Natural killer cell (primary cell): ENCODE measurements at regions of chr4 and their contacts with region 1.

Region 1: DNA sequence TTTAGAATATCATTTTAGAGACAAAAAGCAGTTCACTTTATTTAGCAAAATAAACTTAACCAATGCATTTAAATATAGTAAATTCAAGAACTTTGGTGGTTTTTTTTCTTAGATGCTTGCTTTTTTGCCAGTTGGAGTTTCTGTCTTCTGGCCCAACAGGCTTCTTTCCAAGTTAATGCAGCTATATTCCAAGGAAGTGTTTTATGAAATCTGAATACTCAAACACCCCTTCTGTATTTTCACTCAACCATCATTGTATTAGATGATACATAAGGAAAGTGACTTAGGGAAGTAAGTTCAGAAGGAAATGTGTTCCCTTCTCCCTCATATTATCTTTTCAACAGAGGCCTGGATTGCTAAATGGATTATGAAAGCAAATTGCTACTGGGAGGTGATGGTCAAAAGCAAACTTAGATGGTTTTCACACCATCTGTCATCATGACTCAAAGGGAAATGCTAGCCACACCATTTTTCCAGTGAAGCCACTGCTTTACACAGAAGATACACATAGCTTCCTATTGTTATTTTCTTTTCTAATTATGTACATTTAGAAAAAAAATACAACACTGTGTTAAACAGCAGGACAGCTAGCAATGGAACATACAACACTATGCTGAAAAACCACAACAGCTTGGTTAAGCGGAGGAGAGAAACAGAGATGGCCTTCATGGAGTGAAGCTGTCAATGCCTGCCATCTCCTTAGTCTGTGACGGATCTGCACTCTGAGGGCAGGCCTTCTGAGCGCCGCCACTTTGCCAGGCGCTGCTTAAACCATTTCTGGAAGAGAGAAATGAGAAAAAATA is 32.9 kb downstream of the HOPX start:
- DNase-seq: peak in 1 of 2 donors; percentile 20
- ATAC-seq: peak; percentile 47 to 65 (median 56)
- H3K4me3 ChIP-seq: no peak overlapping the region
- H3K4me3 Mint-ChIP-seq: peak overlapping the region; percentile 81
- H3K27ac ChIP-seq: peak overlapping the region; percentile 61
- H3K27ac Mint-ChIP-seq: peak overlapping the region; percentile 95 to 98
- H3K4me1 ChIP-seq: peaks cover 46% of the 10 kb centered on the region
- H3K4me1 Mint-ChIP-seq: peaks cover 85% of the 10 kb centered on the region in 2 donors
- H3K27me3 ChIP-seq: no peaks in the 10 kb centered on the region
- H3K27me3 Mint-ChIP-seq: no peaks in the 10 kb centered on the region
- CTCF ChIP-seq: no peak

Region 2: DNA sequence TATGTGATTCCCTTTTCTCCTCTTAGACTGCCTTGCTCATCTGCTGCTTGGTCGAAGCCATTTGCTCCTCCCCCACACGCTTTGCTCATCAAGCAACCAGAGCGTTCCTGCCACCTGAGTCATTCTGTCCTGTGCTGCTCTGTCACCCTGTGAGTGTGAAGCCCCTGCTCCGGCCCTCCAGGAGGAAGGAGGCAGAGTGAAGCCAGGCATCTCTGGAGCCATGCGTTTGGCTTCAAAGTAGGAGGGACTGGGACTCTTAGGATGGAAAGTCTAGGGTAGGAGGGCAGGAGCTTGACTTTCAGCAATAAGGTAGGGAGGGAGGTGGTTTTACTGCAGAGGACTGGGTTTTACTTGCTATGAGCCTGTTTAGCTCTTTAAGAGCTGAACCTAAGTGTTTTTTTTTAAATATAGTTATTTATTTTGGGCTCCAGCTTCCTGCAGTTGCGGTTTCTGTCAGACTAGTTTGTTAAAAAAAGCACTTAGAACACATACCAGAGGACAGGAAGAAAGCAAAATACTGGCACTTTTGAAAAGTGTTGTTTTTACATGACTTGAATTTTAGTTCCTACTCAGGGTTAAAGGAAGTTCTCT is 109.7 kb after region 1 on chr4:
- intact Hi-C with region 1: loop called (anchors 5 kb)
- DNase-seq: peak; percentile 56 to 77
- ATAC-seq: peak; percentile 80 to 92 (median 86)
- H3K4me3 ChIP-seq: peak overlapping the region; percentile 10
- H3K4me3 Mint-ChIP-seq: peak overlapping the region; percentile 90
- H3K27ac ChIP-seq: peak overlapping the region; percentile 79
- H3K27ac Mint-ChIP-seq: peak overlapping the region; percentile 91 to 94
- H3K4me1 ChIP-seq: peaks cover 32% of the 10 kb centered on the region
- H3K4me1 Mint-ChIP-seq: peaks cover 33 to 45% of the 10 kb centered on the region in 2 donors
- H3K27me3 ChIP-seq: no peaks in the 10 kb centered on the region
- H3K27me3 Mint-ChIP-seq: no peaks in the 10 kb centered on the region
- CTCF ChIP-seq: no peak